HEK293T (cell line): ENCODE measurements at regions of chr16 and their contacts with region 1.

Region 1: GRCh38 chr16:30557957-30558788 is at the start of gene ZNF764:
- DNase-seq: peak; percentile 98

Region 2: DNA sequence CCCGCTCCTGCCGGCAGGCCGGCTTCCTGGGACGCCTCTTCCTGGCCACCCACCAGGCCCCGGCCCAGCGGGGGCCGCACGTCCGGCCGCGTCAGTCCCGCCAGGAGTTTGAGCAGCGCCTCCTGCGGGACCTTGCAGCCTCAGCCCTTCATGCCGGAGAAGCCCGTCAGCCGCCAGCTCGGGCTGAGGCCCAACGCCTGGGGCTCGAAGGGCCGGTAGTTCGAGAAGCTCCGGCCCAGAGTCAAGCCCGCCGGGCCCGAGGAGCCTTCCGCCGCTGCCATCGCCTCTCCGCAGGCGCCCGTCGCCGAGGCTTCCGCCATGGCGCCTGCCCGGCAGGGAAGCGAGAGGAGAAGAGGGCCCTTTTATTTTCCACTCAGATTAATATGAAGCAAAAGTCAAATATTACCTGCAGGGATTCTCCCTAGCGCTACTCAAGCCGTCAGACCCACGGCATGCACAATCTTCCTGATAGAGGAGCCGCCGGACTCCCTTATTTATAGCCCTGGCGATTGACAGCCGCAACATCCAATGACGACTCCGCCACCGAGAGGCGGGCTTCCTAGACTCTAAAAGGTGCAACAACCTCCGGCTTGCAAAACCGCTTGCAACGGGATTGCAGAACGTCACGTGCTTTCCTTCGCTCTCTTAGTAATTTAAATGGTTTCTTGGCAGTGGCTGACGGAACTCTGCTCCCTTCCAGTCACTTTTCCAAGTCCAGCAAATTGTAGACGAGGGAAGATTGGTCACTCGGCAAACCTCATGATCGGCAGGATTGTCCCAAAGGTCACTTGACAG is 112.6 kb before region 1 on chr16 and contains the start of gene SEPHS2:
- CTCF ChIA-PET with region 1: interaction called, 3 read pairs
- POLR2A ChIA-PET with region 1: interaction called, 14 read pairs
- DNase-seq: peak; percentile 98

Region 3: DNA sequence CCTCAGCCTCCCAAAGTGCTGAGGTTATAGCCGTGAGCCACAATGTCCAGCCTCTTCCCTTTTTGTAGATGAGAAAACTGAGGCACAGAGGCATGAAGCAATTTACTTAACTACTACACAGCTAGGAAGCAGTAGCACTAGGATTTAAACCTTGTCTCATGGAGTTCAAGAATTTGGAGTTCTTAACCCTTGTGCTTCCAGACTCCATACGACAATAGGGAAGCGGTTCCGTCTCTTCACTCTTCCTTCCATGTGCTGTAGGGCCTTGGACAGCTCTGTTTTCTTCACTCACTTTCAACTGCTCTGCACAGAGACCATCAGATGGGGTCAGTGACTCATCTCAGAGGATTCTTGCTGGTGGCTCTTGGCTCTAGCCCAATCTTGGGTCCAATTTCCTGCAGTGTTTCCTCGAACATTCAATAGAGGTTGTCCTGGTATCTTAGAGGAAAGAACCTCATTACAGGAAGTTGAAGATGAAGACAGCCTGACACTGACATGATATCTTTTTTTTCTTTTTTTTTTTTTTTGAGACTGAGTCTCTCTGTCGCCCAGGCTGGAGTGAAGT is 66.3 kb before region 1 on chr16:
- CTCF ChIA-PET with region 1: no interaction called
- POLR2A ChIA-PET with region 1: no interaction called
- DNase-seq: peak; percentile 22

Region 4: GRCh38 chr16:30541502-30542329 is 16.5 kb before region 1 on chr16:
- CTCF ChIA-PET with region 1: interaction called, 6 read pairs
- POLR2A ChIA-PET with region 1: interaction called, 181 read pairs
- DNase-seq: no peak

Region 5: DNA sequence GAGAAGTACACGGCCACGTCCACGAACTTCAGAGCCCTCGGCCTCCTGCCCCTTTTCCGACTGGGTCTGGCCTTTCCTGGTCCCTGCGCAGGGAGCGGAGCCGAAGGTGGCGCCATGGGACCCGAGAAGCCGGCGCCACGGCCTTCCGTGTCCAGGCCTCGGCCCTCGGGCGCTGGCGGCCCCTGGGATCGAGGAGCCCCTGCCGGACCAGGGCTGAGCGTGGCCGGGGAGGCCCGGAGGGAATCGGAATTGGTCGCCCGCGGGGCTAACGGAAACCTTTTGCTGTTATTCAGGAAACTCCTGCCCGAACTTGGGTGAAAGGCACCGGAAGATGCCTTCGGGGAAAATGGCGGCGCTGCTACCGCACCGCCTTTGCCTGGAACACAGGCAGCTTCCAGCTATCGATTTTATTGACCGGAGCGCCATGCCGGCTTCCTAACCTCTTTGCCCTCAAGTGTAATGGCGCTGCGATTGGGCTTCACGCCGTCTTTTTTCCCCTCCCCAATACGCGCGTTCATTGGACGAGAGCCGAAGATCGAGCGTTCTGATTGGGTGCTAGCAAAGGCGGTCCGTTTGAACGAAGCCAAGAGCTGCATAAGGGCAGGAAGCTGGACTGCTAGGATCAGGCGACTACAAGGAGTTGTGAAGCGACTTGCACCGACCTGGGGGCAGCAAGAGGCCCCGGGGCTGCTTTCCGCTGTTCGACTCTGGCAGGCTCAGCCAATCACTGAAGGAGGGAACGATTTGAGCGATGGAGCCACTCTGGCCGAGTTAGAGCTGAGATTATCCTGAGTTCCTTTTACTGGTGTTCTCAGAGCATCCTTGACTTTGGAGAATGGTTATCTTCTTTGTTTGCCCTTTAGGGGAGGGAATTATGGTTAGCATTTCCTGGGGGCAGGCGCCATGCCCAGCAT is 52.0 kb after region 1 on chr16 and contains the start of gene ZNF689:
- CTCF ChIA-PET with region 1: no interaction called
- POLR2A ChIA-PET with region 1: interaction called, 16 read pairs
- DNase-seq: peak; percentile 100

Region 6: DNA sequence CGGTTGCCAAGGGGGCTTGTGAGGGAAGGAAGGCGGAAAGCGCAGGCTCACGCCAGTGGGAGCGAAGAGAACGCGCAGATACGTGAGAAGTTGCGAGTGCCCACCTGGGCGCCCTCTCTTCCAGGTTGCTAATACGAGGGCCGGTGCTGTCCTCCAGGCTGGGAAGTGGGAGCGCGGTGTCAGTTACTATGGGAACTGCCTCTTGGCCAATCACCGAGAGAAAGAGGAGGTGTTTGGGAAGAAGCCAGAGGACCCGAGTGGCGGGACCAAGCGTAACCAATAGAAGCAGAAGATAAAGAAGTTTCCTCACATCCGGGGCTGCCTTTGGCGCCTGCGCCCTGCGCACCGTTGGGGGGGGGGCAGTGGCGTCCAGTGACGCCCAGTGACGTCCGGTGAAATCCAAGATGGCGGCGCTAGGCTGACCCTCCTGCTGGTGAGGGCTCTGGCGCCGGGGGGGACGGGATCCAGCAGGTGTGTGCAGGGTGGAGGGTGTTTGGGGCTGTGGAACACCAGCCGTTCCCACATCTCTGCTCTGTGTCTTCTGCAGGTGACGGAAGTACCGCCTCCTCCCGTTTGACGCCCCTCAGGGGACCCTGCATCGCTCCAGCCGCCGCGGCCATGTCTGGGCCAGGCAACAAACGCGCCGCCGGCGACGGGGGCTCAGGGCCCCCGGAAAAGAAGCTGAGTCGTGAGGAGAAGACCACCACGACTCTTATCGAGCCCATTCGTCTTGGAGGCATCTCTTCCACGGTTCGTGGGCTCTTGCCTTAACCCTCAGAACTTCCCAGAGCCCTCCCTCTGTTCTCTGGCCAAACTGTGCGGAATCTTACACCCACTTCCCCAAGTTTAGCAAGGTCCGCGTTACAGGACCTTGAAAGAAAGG is 204.0 kb after region 1 on chr16 and contains the starts of genes CFAP119 and RNF40:
- CTCF ChIA-PET with region 1: no interaction called
- POLR2A ChIA-PET with region 1: no interaction called
- DNase-seq: peak; percentile 100